Endothelial cell of umbilical vein (primary cell): ENCODE measurements at regions of chr18 and their contacts with region 1.

Region 1: GRCh38 chr18:50819728-50820378 is at the start of gene MRO:
- DNase-seq: peak; percentile 78
- H3K4me3 ChIP-seq: no peak within 1 kb of the TSS
- H3K27ac ChIP-seq: no peak within 1 kb of the TSS
- H3K4me1 ChIP-seq: no peaks in the 10 kb centered on the region
- H3K27me3 ChIP-seq: peaks cover 2 to 6% of the 10 kb centered on the region in 2 experiments
- CTCF ChIP-seq: peak; percentile 93 to 94
- POLR2A ChIP-seq: no peak
- total RNA-seq, gene MRO: not detected in 2 replicates

Region 2: GRCh38 chr18:50836521-50836957 is 16.7 kb after region 1 on chr18:
- CTCF ChIA-PET with region 1: interaction called, 8 read pairs
- POLR2A ChIA-PET with region 1: no interaction called
- dilution Hi-C with region 1: no loop called
- intact Hi-C with region 1: loop called (anchors 1 kb)
- DNase-seq: peak; percentile 84
- H3K4me3 ChIP-seq: no peak overlapping the region
- H3K27ac ChIP-seq: no peak overlapping the region
- H3K4me1 ChIP-seq: peaks cover 12% of the 10 kb centered on the region
- H3K27me3 ChIP-seq: peaks cover 0 to 3% of the 10 kb centered on the region in 2 experiments
- CTCF ChIP-seq: no peak
- POLR2A ChIP-seq: no peak

Region 3: DNA sequence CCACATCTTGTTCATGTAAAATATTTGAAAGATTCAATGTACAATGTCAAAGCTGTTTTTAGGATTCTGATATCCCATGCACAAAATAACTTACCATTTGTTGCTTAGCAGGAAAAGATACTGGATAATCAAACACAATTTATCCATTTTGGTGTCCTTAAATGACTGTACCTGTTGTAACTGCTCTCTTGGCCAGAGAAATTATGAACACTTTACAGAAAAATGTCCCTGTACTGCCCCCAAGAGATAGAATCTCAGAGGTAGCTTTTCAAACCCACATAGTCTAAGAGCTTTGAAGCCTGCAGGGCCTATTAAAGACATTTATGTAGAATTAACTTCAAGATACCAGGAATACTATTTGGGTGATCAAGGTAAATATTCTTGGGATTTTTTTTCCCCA is 46.9 kb after region 1 on chr18:
- CTCF ChIA-PET with region 1: interaction called, 12 read pairs
- POLR2A ChIA-PET with region 1: no interaction called
- dilution Hi-C with region 1: no loop called
- intact Hi-C with region 1: loop called (anchors 1 kb)
- DNase-seq: peak; percentile 12
- H3K4me3 ChIP-seq: no peak overlapping the region
- H3K27ac ChIP-seq: no peak overlapping the region
- H3K4me1 ChIP-seq: peaks cover 3% of the 10 kb centered on the region
- H3K27me3 ChIP-seq: peaks cover 0 to 3% of the 10 kb centered on the region in 2 experiments
- CTCF ChIP-seq: no peak
- POLR2A ChIP-seq: no peak

Region 4: GRCh38 chr18:50967714-50968661 is 148.1 kb after region 1 on chr18 and contains the start of gene ELAC1:
- CTCF ChIA-PET with region 1: interaction called, 5 read pairs
- POLR2A ChIA-PET with region 1: no interaction called
- dilution Hi-C with region 1: no loop called
- intact Hi-C with region 1: loop called (anchors 1 kb)
- DNase-seq: peak; percentile 75
- H3K4me3 ChIP-seq: peak within 1 kb of the TSS; percentile 58 to 95 (median 93)
- H3K27ac ChIP-seq: peak within 1 kb of the TSS; percentile 87
- H3K4me1 ChIP-seq: peaks cover 11% of the 10 kb centered on the region
- H3K27me3 ChIP-seq: no peaks in the 10 kb centered on the region
- CTCF ChIP-seq: no peak
- POLR2A ChIP-seq: peak; percentile 94
- total RNA-seq, gene ELAC1: 6.0 and 7.6 TPM in 2 replicates

Region 5: GRCh38 chr18:51029694-51030536 is 210.1 kb after region 1 on chr18 and contains the start of gene SMAD4:
- CTCF ChIA-PET with region 1: interaction called, 6 read pairs
- POLR2A ChIA-PET with region 1: no interaction called
- dilution Hi-C with region 1: no loop called
- intact Hi-C with region 1: loop called (anchors 1 kb)
- DNase-seq: peak; percentile 97
- H3K4me3 ChIP-seq: peak within 1 kb of the TSS; percentile 64 to 87 (median 87)
- H3K27ac ChIP-seq: peak within 1 kb of the TSS; percentile 93
- H3K4me1 ChIP-seq: peaks cover 21% of the 10 kb centered on the region
- H3K27me3 ChIP-seq: no peaks in the 10 kb centered on the region
- CTCF ChIP-seq: no peak
- POLR2A ChIP-seq: peak; percentile 85
- total RNA-seq, gene SMAD4: 79.3 and 82.8 TPM in 2 replicates

Region 6: GRCh38 chr18:51051105-51051712 is 231.4 kb after region 1 on chr18:
- CTCF ChIA-PET with region 1: interaction called, 16 read pairs
- POLR2A ChIA-PET with region 1: no interaction called
- dilution Hi-C with region 1: no loop called
- intact Hi-C with region 1: loop called (anchors 1 kb)
- DNase-seq: peak; percentile 56
- H3K4me3 ChIP-seq: no peak overlapping the region
- H3K27ac ChIP-seq: no peak overlapping the region
- H3K4me1 ChIP-seq: no peaks in the 10 kb centered on the region
- H3K27me3 ChIP-seq: no peaks in the 10 kb centered on the region
- CTCF ChIP-seq: peak; percentile 64 to 71
- POLR2A ChIP-seq: no peak

Region 7: GRCh38 chr18:51110073-51110803 is 290.4 kb after region 1 on chr18:
- CTCF ChIA-PET with region 1: interaction called, 6 read pairs
- POLR2A ChIA-PET with region 1: no interaction called
- dilution Hi-C with region 1: no loop called
- intact Hi-C with region 1: loop called (anchors 1 kb)
- DNase-seq: peak; percentile 20
- H3K4me3 ChIP-seq: no peak overlapping the region
- H3K27ac ChIP-seq: no peak overlapping the region
- H3K4me1 ChIP-seq: peaks cover 9% of the 10 kb centered on the region
- H3K27me3 ChIP-seq: no peaks in the 10 kb centered on the region
- CTCF ChIP-seq: peak; percentile 87 to 98
- POLR2A ChIP-seq: no peak